ENCODE measurements at regions of chr19 and their contacts with region 1.

Region 1: GRCh38 chr19:33795370-33796163 is 1.1 kb upstream of the KCTD15 start:
- DNase-seq: peak; percentile 31 to 54 (median 45)
- H3K4me3 ChIP-seq: peak overlapping the region in 1 of 2 donors; percentile 35
- H3K4me3 Mint-ChIP-seq: peak overlapping the region; percentile 74 to 87 (median 78)
- H3K27ac ChIP-seq: peak overlapping the region; percentile 15
- H3K27ac Mint-ChIP-seq: peak overlapping the region in 3 of 7 donors; percentile 16 to 77 (median 47)
- H3K4me1 ChIP-seq: peaks cover 14% of the 10 kb centered on the region
- H3K4me1 Mint-ChIP-seq: peaks cover 3 to 29% (median 5%) of the 10 kb centered on the region in 4 donors
- H3K27me3 ChIP-seq: peaks cover 11% of the 10 kb centered on the region
- H3K27me3 Mint-ChIP-seq: peaks cover 13 to 17% of the 10 kb centered on the region in 2 donors

Region 2: GRCh38 chr19:33501693-33502356 is 293.7 kb before region 1 on chr19:
- CTCF ChIA-PET with region 1: no interaction called
- POLR2A ChIA-PET with region 1: no interaction called
- intact Hi-C with region 1: no loop called
- DNase-seq: no peak
- H3K4me3 ChIP-seq: no peak overlapping the region
- H3K4me3 Mint-ChIP-seq: no peak overlapping the region
- H3K27ac ChIP-seq: no peak overlapping the region
- H3K27ac Mint-ChIP-seq: peak overlapping the region in 1 of 7 donors; percentile 20
- H3K4me1 ChIP-seq: no peaks in the 10 kb centered on the region
- H3K4me1 Mint-ChIP-seq: peaks cover 0 to 14% (median 6%) of the 10 kb centered on the region in 4 donors
- H3K27me3 ChIP-seq: no peaks in the 10 kb centered on the region
- H3K27me3 Mint-ChIP-seq: no peaks in the 10 kb centered on the region

Region 3: DNA sequence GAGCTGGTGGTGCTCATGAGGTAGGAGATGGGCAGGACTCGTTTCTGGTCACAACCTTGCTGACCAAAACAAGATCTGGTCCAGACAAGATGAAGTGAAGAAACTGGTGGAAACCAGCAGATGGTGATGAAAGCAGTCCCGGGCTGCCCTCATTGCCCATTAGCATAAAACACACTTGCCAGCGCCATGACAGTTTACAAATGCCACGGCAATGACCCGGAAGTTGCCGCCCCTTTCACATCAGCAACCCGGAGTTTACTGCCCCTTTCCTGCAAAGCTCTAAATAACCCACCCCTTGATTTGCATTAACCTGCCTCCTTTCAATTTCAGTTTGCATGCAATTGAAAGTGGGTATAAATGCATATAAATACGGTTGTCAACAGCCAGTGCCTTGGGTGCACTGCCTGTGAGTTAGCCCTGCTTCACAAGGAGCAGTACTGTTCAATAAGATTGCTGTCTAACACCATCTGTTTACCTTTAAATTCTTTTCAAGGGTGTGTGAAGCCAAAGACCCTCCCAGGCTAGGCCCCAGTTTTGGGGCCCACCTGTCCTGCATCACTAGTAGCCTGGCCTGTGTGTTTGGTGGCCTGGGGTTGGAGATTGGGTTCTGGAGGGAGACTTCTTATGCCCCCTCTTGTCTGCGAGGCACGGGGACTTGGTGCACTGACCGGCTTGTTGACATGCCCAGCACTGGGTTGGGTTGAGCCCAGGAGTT is 135.0 kb before region 1 on chr19:
- CTCF ChIA-PET with region 1: no interaction called
- POLR2A ChIA-PET with region 1: no interaction called
- intact Hi-C with region 1: no loop called
- DNase-seq: no peak
- H3K4me3 ChIP-seq: no peak overlapping the region
- H3K4me3 Mint-ChIP-seq: no peak overlapping the region
- H3K27ac ChIP-seq: no peak overlapping the region
- H3K27ac Mint-ChIP-seq: no peak overlapping the region
- H3K4me1 ChIP-seq: no peaks in the 10 kb centered on the region
- H3K4me1 Mint-ChIP-seq: no peaks in the 10 kb centered on the region
- H3K27me3 ChIP-seq: no peaks in the 10 kb centered on the region
- H3K27me3 Mint-ChIP-seq: peaks cover 16 to 30% of the 10 kb centered on the region in 2 donors

Region 4: GRCh38 chr19:33690378-33691029 is 105.1 kb before region 1 on chr19:
- CTCF ChIA-PET with region 1: no interaction called
- POLR2A ChIA-PET with region 1: no interaction called
- intact Hi-C with region 1: no loop called
- DNase-seq: no peak
- H3K4me3 ChIP-seq: no peak overlapping the region
- H3K4me3 Mint-ChIP-seq: no peak overlapping the region
- H3K27ac ChIP-seq: no peak overlapping the region
- H3K27ac Mint-ChIP-seq: no peak overlapping the region
- H3K4me1 ChIP-seq: no peaks in the 10 kb centered on the region
- H3K4me1 Mint-ChIP-seq: no peaks in the 10 kb centered on the region
- H3K27me3 ChIP-seq: no peaks in the 10 kb centered on the region
- H3K27me3 Mint-ChIP-seq: peaks cover 5 to 18% of the 10 kb centered on the region in 2 donors

Region 5: GRCh38 chr19:33755099-33756035 is 40.2 kb before region 1 on chr19:
- CTCF ChIA-PET with region 1: no interaction called
- POLR2A ChIA-PET with region 1: no interaction called
- intact Hi-C with region 1: no loop called
- DNase-seq: no peak
- H3K4me3 ChIP-seq: no peak overlapping the region
- H3K4me3 Mint-ChIP-seq: no peak overlapping the region
- H3K27ac ChIP-seq: no peak overlapping the region
- H3K27ac Mint-ChIP-seq: no peak overlapping the region
- H3K4me1 ChIP-seq: no peaks in the 10 kb centered on the region
- H3K4me1 Mint-ChIP-seq: no peaks in the 10 kb centered on the region
- H3K27me3 ChIP-seq: no peaks in the 10 kb centered on the region
- H3K27me3 Mint-ChIP-seq: peaks cover 0 to 6% of the 10 kb centered on the region in 2 donors

Region 6: DNA sequence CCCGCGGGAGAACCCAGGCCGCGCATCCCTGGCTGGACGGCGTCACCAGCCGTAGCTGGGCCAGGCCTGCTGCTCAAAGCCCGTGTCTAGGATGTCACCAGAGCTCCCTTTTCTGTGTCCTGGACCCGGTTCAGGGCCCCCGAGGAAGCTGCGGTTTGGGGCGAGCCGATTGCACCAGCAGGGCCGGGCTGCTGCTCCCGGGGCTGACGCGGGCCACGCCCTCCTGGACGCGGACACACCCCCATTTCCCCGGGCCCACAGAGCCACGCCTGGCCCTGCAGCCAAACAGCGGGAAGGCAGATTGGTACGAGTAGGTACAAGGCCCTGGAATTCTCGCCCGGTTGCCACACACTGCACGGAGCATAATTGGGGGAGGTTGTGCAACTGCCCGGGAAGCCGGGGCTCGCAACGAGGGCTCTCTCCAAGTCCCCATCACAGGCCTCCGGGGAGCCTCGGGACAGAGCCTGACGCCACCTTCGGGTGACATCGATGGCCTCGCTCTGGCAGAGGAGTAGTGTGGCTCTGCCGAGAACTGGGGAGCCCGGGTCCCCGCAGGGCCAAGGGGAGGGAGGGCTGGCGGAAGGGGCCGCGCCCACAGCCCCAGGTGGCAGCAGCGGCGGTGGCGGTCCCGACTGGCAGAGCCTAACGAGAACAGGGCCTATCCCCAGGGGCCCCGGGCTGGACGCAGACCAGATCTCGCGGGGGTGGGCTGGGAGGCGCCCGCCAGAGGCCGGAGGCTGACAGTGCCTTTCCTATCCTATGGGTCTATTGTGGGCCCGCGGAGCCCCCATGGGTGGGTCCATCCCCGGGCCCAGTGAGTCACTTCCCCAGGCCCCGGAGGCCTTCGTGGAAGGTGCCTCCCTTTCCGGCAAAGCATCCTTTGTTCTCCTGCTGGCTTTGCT is 24.6 kb after region 1 on chr19:
- CTCF ChIA-PET with region 1: interaction called, 9 read pairs
- POLR2A ChIA-PET with region 1: interaction called, 55 read pairs
- intact Hi-C with region 1: loop called (anchors 1 kb)
- DNase-seq: peak; percentile 52 to 68 (median 64)
- H3K4me3 ChIP-seq: peak overlapping the region; percentile 47 to 48
- H3K4me3 Mint-ChIP-seq: peak overlapping the region; percentile 76 to 86 (median 80)
- H3K27ac ChIP-seq: peak overlapping the region; percentile 36
- H3K27ac Mint-ChIP-seq: peak overlapping the region in 6 of 7 donors; percentile 29 to 77 (median 70)
- H3K4me1 ChIP-seq: peaks cover 18% of the 10 kb centered on the region
- H3K4me1 Mint-ChIP-seq: peaks cover 8 to 48% (median 33%) of the 10 kb centered on the region in 4 donors
- H3K27me3 ChIP-seq: no peaks in the 10 kb centered on the region
- H3K27me3 Mint-ChIP-seq: no peaks in the 10 kb centered on the region

Region 7: DNA sequence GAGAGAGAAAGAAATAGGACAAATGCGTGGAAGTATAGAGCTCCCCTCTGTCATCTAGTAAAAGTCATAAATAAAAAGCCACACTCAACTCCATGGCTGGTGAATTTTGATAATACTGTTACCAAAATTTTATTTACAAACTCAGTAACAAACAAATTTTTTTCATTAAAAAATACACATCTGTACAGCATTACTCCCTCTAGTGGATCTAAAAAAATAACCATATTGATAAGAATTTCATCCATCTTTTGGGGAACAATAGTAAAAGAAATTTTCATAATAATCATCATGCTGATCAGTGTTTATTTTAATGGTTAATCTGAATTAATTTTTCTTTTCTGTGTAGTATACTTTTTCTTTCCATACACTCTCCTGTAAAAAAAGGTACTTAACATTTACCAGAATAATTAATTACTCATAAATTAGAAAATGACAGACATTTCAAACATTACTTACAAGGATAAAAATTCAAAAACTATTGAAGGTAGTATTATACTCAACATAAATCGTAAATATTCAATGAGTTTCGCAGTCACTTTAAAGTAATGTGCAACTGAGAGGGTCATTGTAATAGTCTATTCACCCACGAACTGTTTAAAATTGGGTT is 203.3 kb after region 1 on chr19:
- CTCF ChIA-PET with region 1: interaction called, 9 read pairs
- POLR2A ChIA-PET with region 1: interaction called, 4 read pairs
- intact Hi-C with region 1: loop called (anchors 5 kb)
- DNase-seq: peak in 4 of 5 donors; percentile 1 to 18 (median 4)
- H3K4me3 ChIP-seq: no peak overlapping the region
- H3K4me3 Mint-ChIP-seq: no peak overlapping the region
- H3K27ac ChIP-seq: no peak overlapping the region
- H3K27ac Mint-ChIP-seq: no peak overlapping the region
- H3K4me1 ChIP-seq: no peaks in the 10 kb centered on the region
- H3K4me1 Mint-ChIP-seq: no peaks in the 10 kb centered on the region
- H3K27me3 ChIP-seq: peaks cover 3% of the 10 kb centered on the region
- H3K27me3 Mint-ChIP-seq: peaks cover 15 to 19% of the 10 kb centered on the region in 2 donors